HepG2 (cell line): ENCODE measurements at regions of chr14 and their contacts with region 1.

Region 1: DNA sequence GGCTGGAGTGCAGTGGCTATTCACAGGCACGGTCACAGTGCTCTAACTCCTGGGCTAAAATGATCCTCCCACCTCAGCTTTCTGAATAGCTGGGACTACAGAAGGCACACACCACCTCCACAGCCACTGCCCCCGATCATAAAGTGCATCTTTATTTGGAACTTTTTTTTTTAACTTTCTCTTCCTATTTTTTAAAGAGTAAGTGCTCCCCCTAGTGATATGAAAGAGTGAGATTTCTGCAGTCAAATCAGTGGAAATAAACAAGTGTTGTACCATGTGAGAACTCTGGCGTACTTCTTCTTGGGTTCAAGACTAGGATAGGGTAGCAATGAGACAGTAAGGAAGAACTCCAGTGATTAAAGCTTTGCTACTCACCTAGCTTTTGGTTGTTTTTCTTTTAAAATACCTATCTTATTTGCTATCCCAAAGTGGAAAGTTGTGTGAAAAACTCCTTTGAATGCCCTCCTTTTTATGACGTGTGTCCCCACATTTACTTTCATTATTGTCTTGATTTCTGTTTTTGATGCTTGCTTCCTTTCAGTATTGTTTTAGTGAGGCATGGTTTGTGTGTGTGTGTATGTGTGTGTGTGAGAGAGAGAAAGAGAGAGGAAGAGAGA is 6.6 kb downstream of the PPP4R4 start:
- DNase-seq: peak; percentile 67
- ATAC-seq: peak; percentile 94
- H3K4me3 ChIP-seq: peak overlapping the region in 2 of 3 experiments; percentile 28 to 47; a peak in 2 of 6 replicates
- H3K27ac ChIP-seq: peak overlapping the region; percentile 52
- H3K4me1 ChIP-seq: peaks cover 66% of the 10 kb centered on the region
- H3K27me3 ChIP-seq: no peaks in the 10 kb centered on the region
- CTCF ChIP-seq: peak; percentile 66
- EP300 ChIP-seq: no peak
- POLR2A ChIP-seq: no peak
- RAD21 ChIP-seq: peak; percentile 38; the same call in 1 of the 2 replicates

Region 2: GRCh38 chr14:94129111-94129757 is 51.5 kb before region 1 on chr14 and contains the start of gene IFI27L2:
- CTCF ChIA-PET with region 1: interaction called, 10 read pairs
- POLR2A ChIA-PET with region 1: no interaction called
- in situ Hi-C with region 1: no loop called
- intact Hi-C with region 1: no loop called
- DNase-seq: peak; percentile 40
- ATAC-seq: peak; percentile 84
- H3K4me3 ChIP-seq: peak within 1 kb of the TSS; percentile 46 to 72 (median 53)
- H3K27ac ChIP-seq: no peak within 1 kb of the TSS
- H3K4me1 ChIP-seq: peaks cover 23% of the 10 kb centered on the region
- H3K27me3 ChIP-seq: peaks cover 2 to 17% of the 10 kb centered on the region in 2 experiments
- CTCF ChIP-seq: 0 out of 2 replicates have a peak, but pooled peaks have one; percentile 9
- EP300 ChIP-seq: no peak
- POLR2A ChIP-seq: no peak
- RAD21 ChIP-seq: no peak
- total RNA-seq, gene IFI27L2: 4.3 and 6.0 TPM in 2 replicates